Ascending aorta (tissue), 2 donors: ENCODE measurements at regions of chr5 and their contacts with region 1.

Region 1: DNA sequence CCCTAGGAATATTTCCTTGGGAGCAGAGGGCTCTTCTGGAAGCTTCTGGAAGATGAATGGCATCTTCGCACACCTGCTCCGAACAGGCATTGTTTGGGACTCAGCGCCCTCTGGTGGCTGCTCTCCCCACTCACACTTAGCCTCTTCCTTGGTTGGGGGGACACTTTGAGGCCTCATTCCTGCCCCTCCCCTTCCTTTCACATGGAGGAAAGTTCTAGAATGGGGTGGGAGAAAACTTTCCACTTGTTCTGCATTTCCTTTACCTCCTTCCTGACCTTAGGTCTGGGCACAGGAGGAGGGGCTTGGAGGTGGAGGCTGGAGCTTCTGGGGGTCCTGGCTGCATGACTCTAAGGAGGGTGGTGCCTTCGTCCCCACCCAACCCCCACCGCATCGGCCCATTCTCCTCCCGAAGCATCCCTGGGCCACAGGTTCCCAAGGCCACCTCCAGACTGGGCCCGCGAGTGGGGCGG is 19.3 kb upstream of the SMIM32 start:
- DNase-seq: no peak
- H3K4me3 ChIP-seq: no peak overlapping the region
- H3K27ac ChIP-seq: no peak overlapping the region
- H3K4me1 ChIP-seq: no peaks in the 10 kb centered on the region
- H3K27me3 ChIP-seq: no peaks in the 10 kb centered on the region
- CTCF ChIP-seq: peak; percentile 53 to 87 (median 76)

Region 2: GRCh38 chr5:135337064-135337463 is 875.2 kb before region 1 on chr5:
- intact Hi-C with region 1: no loop called
- DNase-seq: no peak
- H3K4me3 ChIP-seq: no peak overlapping the region
- H3K27ac ChIP-seq: no peak overlapping the region
- H3K4me1 ChIP-seq: no peaks in the 10 kb centered on the region
- H3K27me3 ChIP-seq: no peaks in the 10 kb centered on the region
- CTCF ChIP-seq: no peak

Region 3: DNA sequence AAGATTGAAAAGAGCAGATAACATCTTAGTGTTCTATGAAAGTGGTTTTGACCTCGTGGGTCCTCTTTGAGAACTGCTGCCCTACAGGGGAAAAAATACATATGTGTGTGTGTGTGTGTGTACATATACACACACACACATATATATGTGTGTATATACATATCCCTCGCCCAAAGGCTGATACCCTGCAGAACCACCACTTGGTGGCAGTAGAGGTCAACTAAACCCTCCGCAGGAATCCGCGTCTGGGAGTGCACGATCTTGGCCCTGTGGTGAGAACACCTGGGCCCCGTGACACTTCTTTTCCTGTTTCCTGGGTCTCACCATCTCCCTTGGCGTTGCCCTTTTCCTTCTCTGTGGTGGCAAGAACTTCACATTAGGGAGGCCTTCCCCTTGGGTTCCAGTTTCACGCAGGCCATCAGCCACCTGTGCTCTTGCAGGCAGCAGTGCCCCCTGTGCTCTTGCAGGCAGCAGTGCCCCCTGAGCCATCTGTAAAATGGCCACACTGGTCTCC is 324.9 kb before region 1 on chr5:
- intact Hi-C with region 1: loop called (anchors 1 kb)
- DNase-seq: no peak
- H3K4me3 ChIP-seq: no peak overlapping the region
- H3K27ac ChIP-seq: no peak overlapping the region
- H3K4me1 ChIP-seq: no peaks in the 10 kb centered on the region
- H3K27me3 ChIP-seq: no peaks in the 10 kb centered on the region
- CTCF ChIP-seq: peak; percentile 67 to 79 (median 71)

Region 4: DNA sequence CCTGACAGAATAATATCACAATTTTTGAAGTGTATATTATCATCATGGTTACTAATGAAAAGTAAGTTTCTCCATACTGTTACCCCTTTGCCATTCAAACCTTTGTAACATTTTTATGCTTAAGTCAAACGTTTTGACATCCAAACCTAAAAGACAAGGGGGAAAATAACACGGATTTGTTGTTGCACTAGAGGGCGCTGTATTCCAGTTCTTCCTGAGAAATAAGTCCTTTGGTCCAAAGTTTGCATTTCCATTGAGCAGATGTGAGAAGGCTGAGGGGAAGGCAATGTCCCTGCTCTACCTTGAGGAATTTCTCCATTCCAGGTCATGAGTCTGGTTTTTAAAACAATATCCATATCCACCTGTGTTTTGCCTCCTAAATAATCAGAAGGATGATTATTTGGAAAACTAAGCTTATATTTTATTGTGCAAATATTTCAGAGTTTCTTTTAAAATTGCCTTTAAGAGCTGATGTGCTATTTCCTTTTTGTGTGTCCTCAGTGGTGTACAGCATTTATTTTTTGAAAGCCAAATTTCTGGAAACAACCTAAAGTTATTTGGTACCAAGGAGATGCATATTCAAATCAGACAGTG is 267.2 kb before region 1 on chr5:
- intact Hi-C with region 1: loop called (anchors 2 kb)
- DNase-seq: peak in 1 of 2 donors; percentile 72
- H3K4me3 ChIP-seq: no peak overlapping the region
- H3K27ac ChIP-seq: no peak overlapping the region
- H3K4me1 ChIP-seq: no peaks in the 10 kb centered on the region
- H3K27me3 ChIP-seq: no peaks in the 10 kb centered on the region
- CTCF ChIP-seq: peak; percentile 67 to 83 (median 73)

Region 5: DNA sequence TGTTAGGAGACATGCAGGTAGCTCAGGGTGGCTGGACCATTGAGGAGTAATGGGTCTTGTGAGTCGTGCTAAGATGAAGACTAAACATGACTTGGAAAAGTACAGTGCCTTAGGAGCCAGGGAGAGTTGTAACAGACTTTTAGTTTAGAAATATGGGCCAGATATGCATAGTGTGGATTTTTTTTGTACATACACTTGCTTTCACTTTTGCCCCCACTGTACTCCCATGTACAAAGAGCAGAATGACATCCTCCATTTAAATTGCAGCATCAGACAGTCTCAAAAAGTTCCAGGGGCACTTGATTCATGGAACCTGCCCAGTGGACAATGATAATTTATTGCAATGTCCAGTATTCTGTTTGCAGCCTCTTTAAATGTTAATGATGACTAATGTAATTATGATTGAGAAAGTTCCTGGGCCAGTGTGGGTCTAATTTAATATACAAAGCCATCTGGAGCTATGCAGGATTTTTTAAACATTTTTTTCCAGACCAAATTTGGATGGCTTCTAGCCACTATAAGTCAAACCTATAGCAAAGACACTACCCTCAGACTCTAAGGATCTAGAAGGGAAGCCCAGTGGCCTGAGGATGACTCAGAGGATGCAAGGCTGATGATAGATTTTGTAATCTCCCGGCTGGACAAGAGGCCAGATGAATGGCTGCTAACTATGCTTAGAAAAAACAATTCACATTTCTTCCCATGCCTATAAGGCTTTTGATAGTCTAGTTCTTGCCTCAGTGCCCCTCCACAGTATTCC is 73.0 kb after region 1 on chr5:
- intact Hi-C with region 1: no loop called
- DNase-seq: no peak
- H3K4me3 ChIP-seq: no peak overlapping the region
- H3K27ac ChIP-seq: no peak overlapping the region
- H3K4me1 ChIP-seq: no peaks in the 10 kb centered on the region
- H3K27me3 ChIP-seq: no peaks in the 10 kb centered on the region
- CTCF ChIP-seq: no peak